ENCODE measurements at regions of chr6 and their contacts with region 1.

Region 1: GRCh38 chr6:33317669-33318425 is at the start of gene ZBTB22:
- DNase-seq: peak; percentile 98
- H3K4me3 ChIP-seq: peak within 1 kb of the TSS; percentile 73
- H3K27ac ChIP-seq: peak within 1 kb of the TSS; percentile 79
- H3K4me1 ChIP-seq: peaks cover 55% of the 10 kb centered on the region
- CTCF ChIP-seq: no peak
- total RNA-seq, gene ZBTB22: 17.4 and 21.6 TPM in 2 replicates

Region 2: DNA sequence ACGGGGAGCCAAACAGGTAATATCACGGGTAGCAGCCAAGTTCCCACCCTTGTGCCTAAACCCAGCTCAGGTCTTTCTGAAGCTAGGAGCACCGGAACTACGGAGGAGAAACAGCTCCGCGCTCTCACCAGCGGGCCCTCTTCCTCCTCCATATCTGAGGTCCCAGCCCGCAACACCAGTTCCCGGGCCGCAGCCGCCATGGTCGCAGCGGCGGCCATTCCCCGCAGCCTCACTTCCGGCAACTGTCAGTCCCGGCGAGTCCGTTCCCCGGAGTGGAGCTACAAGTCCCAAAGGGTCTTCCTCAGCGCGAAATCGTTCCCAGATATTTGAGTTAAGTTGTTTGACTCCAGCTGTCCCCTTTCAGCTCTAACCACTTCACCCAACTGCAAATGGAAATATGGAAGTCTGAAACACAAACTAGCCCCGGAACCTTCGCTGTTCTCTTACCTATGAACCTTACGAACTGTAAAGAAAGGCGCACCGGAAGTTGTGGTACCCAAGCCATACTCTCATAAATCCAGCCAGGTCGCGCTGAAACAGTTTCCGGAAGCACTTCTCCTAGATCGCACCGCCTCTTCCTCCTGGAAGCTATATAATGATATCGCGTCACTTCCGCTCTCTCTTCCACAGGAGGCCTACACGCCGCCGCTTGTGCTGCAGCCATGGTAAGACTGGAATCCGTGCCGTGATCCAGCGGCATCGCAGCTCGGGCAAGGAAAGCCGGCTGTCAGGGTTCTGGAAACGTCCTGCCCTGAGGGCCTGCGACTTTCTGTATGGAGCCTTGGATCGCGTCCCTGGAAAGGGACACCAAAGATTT is 46.2 kb before region 1 on chr6 and contains the starts of genes RPS18 and VPS52:
- CTCF ChIA-PET with region 1: no interaction called
- POLR2A ChIA-PET with region 1: interaction called, 13 read pairs
- intact Hi-C with region 1: no loop called
- DNase-seq: peak; percentile 99
- H3K4me3 ChIP-seq: peak within 1 kb of the TSS; percentile 97
- H3K27ac ChIP-seq: peak within 1 kb of the TSS; percentile 93
- H3K4me1 ChIP-seq: peaks cover 43% of the 10 kb centered on the region
- CTCF ChIP-seq: no peak; the same call in 1 of the 2 replicates
- total RNA-seq, gene RPS18: 7,191 and 8,620 TPM in 2 replicates
- total RNA-seq, gene VPS52: 50.4 and 53.5 TPM in 2 replicates

Region 3: GRCh38 chr6:33410050-33410710 is 92.3 kb after region 1 on chr6:
- CTCF ChIA-PET with region 1: no interaction called
- POLR2A ChIA-PET with region 1: no interaction called
- intact Hi-C with region 1: loop called (anchors 5 kb)
- DNase-seq: peak; percentile 97
- H3K4me3 ChIP-seq: peak overlapping the region; percentile 81
- H3K27ac ChIP-seq: peak overlapping the region; percentile 85
- H3K4me1 ChIP-seq: peaks cover 40% of the 10 kb centered on the region
- CTCF ChIP-seq: no peak

Measured in OCI-LY7 (cell line).